ENCODE measurements at regions of chr3 and their contacts with region 1.

Region 1: GRCh38 chr3:158434412-158435038 is 136.5 kb upstream of the MLF1 start:
- DNase-seq: peak in 41 of 42 donors; percentile 18 to 88 (median 66)

Region 2: DNA sequence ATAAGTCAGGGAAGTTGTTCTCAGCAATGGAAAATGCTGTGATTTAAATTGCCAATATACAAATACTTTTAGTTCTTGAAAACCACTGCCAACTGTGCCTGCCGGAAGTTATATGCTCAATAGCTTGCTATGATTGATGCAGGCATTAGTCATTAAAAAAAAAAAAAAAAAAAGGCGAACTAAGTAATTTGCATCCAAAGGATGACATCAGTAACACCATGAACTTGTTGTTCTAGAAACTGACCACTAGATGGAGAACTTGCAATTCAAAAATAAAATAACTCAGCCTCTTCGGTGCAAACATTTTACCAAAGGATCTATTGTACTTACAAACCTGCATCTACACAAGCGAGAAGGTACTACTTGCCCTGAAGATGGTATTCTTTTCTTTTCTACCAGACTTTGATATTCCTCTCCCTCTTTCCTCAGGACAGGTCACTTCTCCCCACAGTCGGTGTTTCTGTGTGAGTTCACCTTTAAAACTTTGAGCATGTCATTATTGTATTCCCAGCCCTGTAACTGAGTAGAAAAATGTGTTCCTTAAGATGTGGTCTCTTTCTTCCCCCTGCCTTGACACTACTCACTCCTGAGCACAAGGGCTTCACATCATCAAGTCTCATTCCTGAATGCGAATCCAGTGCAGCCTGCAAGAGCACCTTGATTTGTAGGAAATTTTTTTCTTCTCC is 816.3 kb before region 1 on chr3:
- intact Hi-C with region 1: loop called (anchors 5 kb)
- DNase-seq: peak in 2 of 42 donors; percentile 40 to 64

Region 3: DNA sequence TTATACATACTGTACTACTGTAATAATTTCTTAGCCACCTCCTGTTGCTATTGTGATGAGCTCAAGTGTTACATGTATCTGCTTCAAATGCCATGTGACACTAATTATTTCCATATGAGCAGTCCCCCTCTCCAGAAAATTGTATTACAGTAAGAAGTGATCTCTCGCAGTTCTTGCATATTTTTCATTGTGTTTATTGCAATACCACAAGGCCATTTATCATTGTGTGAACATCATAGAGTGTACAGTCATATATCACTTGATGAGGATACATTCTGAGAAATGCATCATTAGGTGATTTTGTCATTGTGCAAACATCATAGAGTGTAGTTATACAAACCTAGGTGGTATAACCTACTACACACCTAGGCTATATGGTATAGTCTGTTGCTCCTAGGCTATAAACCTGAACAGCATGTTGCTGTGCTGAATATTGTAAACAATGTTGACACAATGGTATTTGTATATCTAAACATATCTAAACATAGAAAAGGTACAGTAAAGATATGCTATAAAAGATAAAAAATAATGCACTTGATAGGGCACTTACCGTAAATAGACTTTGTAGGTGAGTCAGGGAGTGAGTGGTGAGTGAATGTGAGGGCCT is 53.2 kb before region 1 on chr3:
- intact Hi-C with region 1: no loop called
- DNase-seq: no peak

Measured in head of caudate nucleus (tissue), 42 donors.